Activated B cell treated with CpG ODN at 0.5 μM for 24 hours (primary cell): ENCODE measurements at regions of chr22 and their contacts with region 1.

Region 1: DNA sequence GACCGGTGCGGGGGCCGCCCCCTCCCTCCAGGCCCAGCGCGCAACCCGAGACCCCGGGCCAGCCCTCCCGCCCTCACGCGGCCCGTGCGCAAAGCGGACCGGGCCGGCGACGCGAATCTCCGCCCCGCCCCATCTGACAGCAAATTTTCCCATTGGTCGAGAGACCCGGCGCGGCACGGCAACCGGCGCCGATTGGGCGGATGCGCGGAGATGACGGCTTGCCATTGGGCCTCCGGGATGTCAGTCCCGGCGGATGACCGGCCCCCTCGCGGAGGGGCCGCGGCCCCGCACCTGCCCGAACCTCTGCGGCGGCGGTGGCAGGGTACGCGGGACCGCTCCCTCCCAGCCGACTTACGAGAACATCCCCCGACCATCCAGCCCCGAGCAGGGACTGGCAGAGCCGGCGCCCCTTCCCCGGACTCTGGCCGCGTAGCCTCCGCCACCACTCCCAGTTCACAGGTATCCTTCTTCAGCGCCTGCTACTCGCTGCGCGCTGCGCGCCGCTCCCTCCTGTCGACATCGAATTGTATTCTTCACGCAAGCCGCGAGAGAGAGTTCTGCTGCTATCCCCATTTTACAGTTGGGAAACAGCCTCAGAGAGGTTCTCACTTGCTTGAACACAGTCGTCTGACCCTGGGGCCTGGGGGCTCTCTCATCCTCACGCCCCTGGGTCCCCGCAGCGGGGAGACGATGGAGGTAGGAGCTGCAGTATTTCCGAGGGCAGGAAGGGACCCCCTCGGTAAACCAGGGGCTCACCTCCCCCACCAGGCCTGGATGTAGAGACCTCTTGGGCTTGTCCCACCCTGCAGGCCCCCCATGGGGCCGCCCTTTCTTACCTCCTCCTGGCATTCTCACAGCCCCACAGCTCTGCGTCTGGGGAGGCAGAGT is at the start of gene ARVCF:
- DNase-seq: peak; percentile 94
- ATAC-seq: peak; percentile 67
- H3K4me3 Mint-ChIP-seq: peak within 1 kb of the TSS; percentile 87
- H3K27ac Mint-ChIP-seq: peak within 1 kb of the TSS; percentile 53
- H3K4me1 Mint-ChIP-seq: peaks cover 21% of the 10 kb centered on the region
- H3K27me3 Mint-ChIP-seq: no peaks in the 10 kb centered on the region
- CTCF ChIP-seq: no peak
- total RNA-seq, gene ARVCF: 2.3 and 6.5 TPM in 2 replicates

Region 2: DNA sequence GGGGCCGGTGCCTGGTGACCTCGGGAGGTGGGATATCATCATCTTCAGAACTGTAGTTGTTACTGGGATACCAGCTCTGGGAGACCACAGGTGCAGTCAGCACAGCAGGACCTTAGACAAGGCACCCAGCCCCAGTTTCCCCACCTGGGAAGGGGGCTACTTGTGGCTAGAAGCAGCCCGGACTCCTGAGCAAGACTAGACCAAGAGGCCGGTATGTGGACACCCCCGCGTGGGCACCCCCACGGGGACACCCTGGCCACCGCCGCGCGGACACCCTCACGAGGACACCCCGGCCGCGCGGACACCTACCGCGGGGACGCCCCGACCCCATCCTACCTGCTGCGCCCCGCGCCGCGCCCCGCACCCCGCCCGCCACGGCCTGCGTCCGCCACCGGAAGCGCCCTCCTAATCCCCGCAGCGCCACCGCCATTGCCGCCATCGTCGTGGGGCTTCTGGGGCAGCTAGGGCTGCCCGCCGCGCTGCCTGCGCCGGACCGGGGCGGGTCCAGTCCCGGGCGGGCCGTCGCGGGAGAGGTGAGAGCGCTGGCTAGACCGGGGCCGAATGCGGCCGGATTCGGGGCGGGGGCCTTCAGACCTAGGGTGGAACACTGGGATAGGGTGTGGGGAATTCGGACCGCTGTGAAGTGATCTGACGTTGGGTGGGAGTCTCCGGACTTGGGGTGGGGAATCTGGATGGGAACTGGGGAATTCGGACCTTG is 75.5 kb before region 1 on chr22 and contains the starts of genes COMT and TXNRD2:
- CTCF ChIA-PET with region 1: no interaction called
- POLR2A ChIA-PET with region 1: interaction called, 9 read pairs
- intact Hi-C with region 1: loop called (anchors 1 kb)
- DNase-seq: peak; percentile 76
- ATAC-seq: peak; percentile 85
- H3K4me3 Mint-ChIP-seq: peak within 1 kb of the TSS; percentile 94
- H3K27ac Mint-ChIP-seq: peak within 1 kb of the TSS; percentile 94
- H3K4me1 Mint-ChIP-seq: peaks cover 46% of the 10 kb centered on the region
- H3K27me3 Mint-ChIP-seq: no peaks in the 10 kb centered on the region
- CTCF ChIP-seq: no peak
- total RNA-seq, gene COMT: 40.6 and 49.5 TPM in 2 replicates
- total RNA-seq, gene TXNRD2: 24.4 and 31.2 TPM in 2 replicates

Region 3: DNA sequence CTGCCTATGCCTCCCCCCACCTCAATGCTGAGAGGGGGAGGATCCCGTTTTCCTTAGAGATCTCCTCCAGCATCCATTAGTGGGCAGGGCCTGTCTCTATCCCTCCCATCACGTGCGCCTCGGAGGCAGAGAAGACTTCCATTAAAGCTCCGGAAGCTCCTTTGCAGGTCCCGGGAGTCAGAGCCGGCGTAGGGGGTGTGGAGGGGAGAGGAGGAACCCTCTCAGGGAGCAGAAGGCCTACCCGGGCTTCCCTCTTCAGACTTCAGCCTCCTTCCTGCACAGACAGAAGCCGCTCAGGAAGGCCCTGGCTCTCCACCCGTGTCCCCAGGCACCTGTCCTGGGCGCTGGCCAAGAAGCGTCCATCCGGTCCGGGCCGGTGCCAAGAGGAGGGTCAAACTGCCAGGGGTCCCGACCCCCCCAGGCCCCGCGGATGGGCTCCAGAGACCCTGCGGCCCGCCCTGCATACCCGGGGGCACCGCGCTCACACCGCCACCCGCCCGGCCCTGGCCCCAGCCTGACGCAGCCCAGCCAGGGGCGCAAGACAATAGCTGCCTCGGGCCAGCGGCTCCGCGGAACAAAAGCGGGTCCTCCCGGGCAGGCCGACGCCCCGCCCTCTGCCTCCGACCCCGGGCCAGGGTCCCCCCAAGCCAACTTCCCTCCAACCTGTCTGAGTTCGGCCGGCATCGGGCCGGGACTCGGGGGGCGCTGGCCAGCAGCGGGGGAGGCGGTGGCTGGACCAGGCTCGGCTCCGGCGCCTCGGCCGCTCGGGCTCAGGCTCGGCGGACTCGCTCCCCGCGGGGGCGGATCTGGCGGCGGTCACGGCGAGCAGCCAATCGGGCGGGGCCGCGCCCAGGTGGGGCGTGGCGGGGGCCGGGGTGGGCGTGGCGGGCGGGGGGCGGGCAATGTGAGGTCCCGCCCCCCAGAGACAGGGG is 30.3 kb before region 1 on chr22:
- CTCF ChIA-PET with region 1: no interaction called
- POLR2A ChIA-PET with region 1: interaction called, 4 read pairs
- intact Hi-C with region 1: loop called (anchors 2 kb)
- DNase-seq: peak; percentile 72
- ATAC-seq: peak; percentile 96
- H3K4me3 Mint-ChIP-seq: peak overlapping the region; percentile 57
- H3K27ac Mint-ChIP-seq: no peak overlapping the region
- H3K4me1 Mint-ChIP-seq: peaks cover 8% of the 10 kb centered on the region
- H3K27me3 Mint-ChIP-seq: peaks cover 2% of the 10 kb centered on the region
- CTCF ChIP-seq: no peak

Region 4: GRCh38 chr22:20037419-20037818 is 20.4 kb after region 1 on chr22:
- CTCF ChIA-PET with region 1: no interaction called
- POLR2A ChIA-PET with region 1: interaction called, 59 read pairs
- intact Hi-C with region 1: loop called (anchors 2 kb)
- DNase-seq: no peak
- ATAC-seq: peak; percentile 26
- H3K4me3 Mint-ChIP-seq: peak overlapping the region; percentile 56
- H3K27ac Mint-ChIP-seq: peak overlapping the region; percentile 85
- H3K4me1 Mint-ChIP-seq: peaks cover 62% of the 10 kb centered on the region
- H3K27me3 Mint-ChIP-seq: no peaks in the 10 kb centered on the region
- CTCF ChIP-seq: no peak

Region 5: GRCh38 chr22:20555276-20555675 is 538.3 kb after region 1 on chr22:
- CTCF ChIA-PET with region 1: no interaction called
- POLR2A ChIA-PET with region 1: no interaction called
- intact Hi-C with region 1: no loop called
- DNase-seq: no peak
- ATAC-seq: no peak
- H3K4me3 Mint-ChIP-seq: no peak overlapping the region
- H3K27ac Mint-ChIP-seq: no peak overlapping the region
- H3K4me1 Mint-ChIP-seq: peaks cover 33% of the 10 kb centered on the region
- H3K27me3 Mint-ChIP-seq: no peaks in the 10 kb centered on the region
- CTCF ChIP-seq: no peak